ENCODE measurements at regions of chr11 and their contacts with region 1.

Region 1: DNA sequence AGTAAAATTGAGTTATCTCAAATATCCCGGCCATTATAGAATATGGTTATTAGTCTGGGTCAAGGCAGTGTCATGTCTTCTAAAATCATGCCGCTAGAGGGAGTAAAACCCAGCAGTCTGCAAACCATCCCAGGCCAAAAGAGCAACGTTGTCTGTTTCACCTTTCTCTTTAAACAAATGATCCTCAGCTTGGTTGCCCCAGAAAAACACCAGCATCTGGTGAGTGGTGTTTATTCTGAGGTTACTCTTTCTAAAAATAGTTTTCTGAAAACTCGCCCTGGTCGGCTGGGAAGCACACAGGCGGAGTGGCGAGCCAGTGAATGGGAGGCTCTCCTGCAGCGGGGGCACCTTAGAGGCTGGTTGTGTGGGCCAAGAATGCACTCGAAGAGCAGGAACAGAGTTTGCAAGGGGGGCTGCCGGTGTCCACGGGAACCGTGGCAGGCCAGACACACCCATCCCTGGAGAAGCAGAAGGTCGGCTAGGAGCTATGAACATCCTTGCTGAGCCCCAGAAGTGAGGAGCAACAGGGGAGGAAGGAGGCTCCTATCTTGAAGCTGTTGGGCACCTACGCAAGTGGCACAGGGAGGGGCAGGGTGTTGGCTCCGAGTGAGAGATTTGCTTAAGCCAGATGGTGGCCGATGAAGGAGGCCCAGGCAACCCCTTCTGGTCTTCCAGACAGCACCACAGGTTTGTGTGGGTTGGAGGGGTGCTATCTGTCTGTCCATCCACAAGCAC is 297.1 kb downstream of the ETS1 start:
- DNase-seq: peak; percentile 51 to 76
- ATAC-seq: peak; percentile 83
- H3K4me3 ChIP-seq: no peak overlapping the region
- H3K27ac ChIP-seq: no peak overlapping the region
- H3K4me1 ChIP-seq: peaks cover 0 to 10% of the 10 kb centered on the region in 2 donors
- H3K27me3 ChIP-seq: no peaks in the 10 kb centered on the region

Region 2: GRCh38 chr11:128039140-128040021 is 250.9 kb before region 1 on chr11:
- intact Hi-C with region 1: loop called in 1 of 2 experiments (anchors 10 kb)
- DNase-seq: peak in 1 of 2 donors; percentile 76
- ATAC-seq: no peak
- H3K4me3 ChIP-seq: no peak overlapping the region
- H3K27ac ChIP-seq: no peak overlapping the region
- H3K4me1 ChIP-seq: no peaks in the 10 kb centered on the region
- H3K27me3 ChIP-seq: no peaks in the 10 kb centered on the region

Region 3: GRCh38 chr11:128453444-128454336 is 163.4 kb after region 1 on chr11:
- intact Hi-C with region 1: loop called in 1 of 2 experiments (anchors 5 kb)
- DNase-seq: peak; percentile 75 to 84
- ATAC-seq: peak; percentile 12
- H3K4me3 ChIP-seq: no peak overlapping the region
- H3K27ac ChIP-seq: peak overlapping the region in 1 of 2 donors; percentile 30
- H3K4me1 ChIP-seq: peaks cover 0 to 7% of the 10 kb centered on the region in 2 donors
- H3K27me3 ChIP-seq: no peaks in the 10 kb centered on the region

Region 4: GRCh38 chr11:128522055-128522942 is 232.0 kb after region 1 on chr11:
- intact Hi-C with region 1: loop called in 1 of 2 experiments (anchors 5 kb)
- DNase-seq: peak; percentile 96 to 97
- ATAC-seq: peak; percentile 97
- H3K4me3 ChIP-seq: peak overlapping the region; percentile 82 to 91
- H3K27ac ChIP-seq: peak overlapping the region; percentile 71 to 97
- H3K4me1 ChIP-seq: peaks cover 0 to 2% of the 10 kb centered on the region in 2 donors
- H3K27me3 ChIP-seq: no peaks in the 10 kb centered on the region

Region 5: DNA sequence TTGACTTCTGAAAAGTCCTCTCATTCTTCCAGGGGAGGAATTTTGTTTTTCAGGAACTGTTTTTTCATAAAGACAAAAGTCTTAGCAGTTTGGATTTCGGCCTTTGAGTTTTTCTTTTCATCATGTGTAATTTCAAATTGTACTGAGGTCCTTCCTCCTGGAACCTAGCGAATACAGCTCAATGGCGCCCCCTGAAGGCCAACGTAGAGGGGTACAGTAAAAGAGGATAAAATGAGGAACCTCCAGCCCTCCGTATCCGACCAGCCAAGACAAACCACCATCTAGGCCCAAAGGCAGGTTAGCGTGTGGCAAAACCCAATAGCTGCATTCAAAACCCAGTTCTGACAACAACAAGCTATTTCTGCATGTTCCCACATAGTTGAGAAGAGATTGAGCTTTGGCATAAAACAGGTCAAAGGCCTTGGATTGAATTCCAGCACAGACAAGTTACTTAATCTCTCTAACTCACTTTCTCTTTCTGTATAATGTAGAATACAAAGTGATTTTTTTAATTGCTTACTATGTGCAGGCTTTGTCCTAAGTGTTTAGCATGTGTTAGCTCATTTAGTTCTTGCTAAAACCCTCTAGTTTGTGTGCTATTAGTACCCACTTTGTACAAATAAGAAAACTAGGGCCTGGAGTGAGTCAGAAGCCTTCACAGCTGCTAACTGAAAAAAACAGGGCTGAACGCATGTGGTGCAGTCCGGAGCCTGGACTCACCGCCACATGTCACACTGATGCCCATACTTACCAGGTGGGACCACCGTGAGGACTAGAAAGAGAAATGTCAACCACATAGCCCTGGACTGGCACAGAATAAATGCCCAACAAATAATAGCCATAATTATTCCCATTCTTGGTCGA is 340.3 kb after region 1 on chr11:
- intact Hi-C with region 1: loop called (anchors 1 to 2 kb)
- DNase-seq: peak; percentile 95 to 97
- ATAC-seq: peak; percentile 92
- H3K4me3 ChIP-seq: no peak overlapping the region
- H3K27ac ChIP-seq: peak overlapping the region in 1 of 2 donors; percentile 2
- H3K4me1 ChIP-seq: no peaks in the 10 kb centered on the region
- H3K27me3 ChIP-seq: no peaks in the 10 kb centered on the region